ENCODE measurements at regions of chr12 and their contacts with region 1.

Region 1: GRCh38 chr12:110431957-110432587 is 18.1 kb downstream of the ARPC3 start:
- DNase-seq: no peak
- H3K4me3 Mint-ChIP-seq: no peak overlapping the region
- H3K27ac Mint-ChIP-seq: peak overlapping the region; percentile 31
- H3K4me1 Mint-ChIP-seq: peaks cover 6% of the 10 kb centered on the region
- H3K27me3 Mint-ChIP-seq: no peaks in the 10 kb centered on the region

Region 2: GRCh38 chr12:109927622-109928021 is 504.4 kb before region 1 on chr12:
- CTCF ChIA-PET with region 1: no interaction called
- POLR2A ChIA-PET with region 1: no interaction called
- DNase-seq: peak; percentile 51
- H3K4me3 Mint-ChIP-seq: no peak overlapping the region
- H3K27ac Mint-ChIP-seq: no peak overlapping the region
- H3K4me1 Mint-ChIP-seq: no peaks in the 10 kb centered on the region
- H3K27me3 Mint-ChIP-seq: no peaks in the 10 kb centered on the region

Region 3: DNA sequence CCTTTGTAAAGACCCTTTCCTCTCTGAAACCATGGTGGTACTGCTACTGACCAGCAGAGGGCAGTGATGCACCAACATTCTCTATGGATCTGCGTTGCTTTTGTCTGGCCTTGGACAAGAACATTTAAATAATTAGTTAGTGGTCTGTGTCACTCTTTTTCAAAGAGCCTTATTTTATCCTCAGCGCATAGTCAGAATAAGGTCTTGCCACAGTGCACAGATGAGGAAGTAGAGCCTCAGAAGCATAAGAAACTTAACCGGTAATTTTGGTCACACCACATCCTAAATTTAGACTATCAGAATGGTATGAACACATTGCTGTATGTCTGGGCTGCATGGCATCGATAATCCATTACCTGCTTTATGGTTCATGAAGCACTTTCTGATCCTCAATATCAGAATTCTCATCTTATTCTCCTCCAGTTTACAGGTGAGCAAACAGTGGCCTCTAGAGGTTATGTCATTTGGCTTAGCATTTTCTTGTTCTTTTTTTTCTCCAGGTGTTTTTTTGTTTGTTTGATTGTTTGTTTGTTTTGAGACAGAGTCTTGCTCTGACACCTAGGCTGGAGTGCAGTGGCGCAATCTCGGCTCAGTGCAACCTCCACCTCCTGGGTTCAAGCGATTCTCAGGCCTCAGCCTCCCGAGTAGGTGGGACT is 331.6 kb before region 1 on chr12:
- CTCF ChIA-PET with region 1: interaction called, 39 read pairs
- POLR2A ChIA-PET with region 1: interaction called, 5 read pairs
- DNase-seq: peak; percentile 64
- H3K4me3 Mint-ChIP-seq: no peak overlapping the region
- H3K27ac Mint-ChIP-seq: peak overlapping the region; percentile 0
- H3K4me1 Mint-ChIP-seq: peaks cover 11% of the 10 kb centered on the region
- H3K27me3 Mint-ChIP-seq: no peaks in the 10 kb centered on the region

Region 4: DNA sequence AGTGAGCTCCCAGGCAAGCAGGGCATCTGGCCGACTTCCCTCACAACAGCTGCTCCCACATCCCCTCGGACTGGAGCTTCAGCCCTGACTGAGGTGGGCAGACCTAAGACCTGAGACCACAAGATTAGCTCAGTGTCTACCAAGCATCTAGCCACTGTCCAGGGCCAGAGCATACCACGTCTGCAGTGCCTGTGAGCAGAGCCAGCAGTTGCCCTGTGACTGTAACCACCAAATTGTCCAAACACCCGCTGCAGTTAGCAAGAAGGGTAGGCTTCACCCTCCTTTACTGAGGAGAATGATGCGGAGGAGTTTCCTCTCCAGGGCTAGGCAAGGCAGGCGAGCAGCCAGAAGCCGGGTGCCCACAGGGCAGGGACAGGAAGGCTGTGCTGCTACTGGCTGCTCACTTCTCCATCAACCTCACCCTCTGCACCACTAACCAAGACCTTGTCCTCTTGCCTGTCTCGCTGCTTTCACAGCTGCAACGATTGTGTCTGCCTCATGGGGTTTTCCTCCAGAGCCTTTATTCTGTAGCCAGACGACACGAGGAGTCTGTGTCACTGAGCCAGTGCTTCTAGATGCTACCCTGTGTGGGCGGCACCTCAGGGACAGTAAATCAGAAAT is 82.4 kb before region 1 on chr12:
- CTCF ChIA-PET with region 1: interaction called, 56 read pairs
- POLR2A ChIA-PET with region 1: interaction called, 10 read pairs
- DNase-seq: peak; percentile 45
- H3K4me3 Mint-ChIP-seq: no peak overlapping the region
- H3K27ac Mint-ChIP-seq: peak overlapping the region; percentile 58
- H3K4me1 Mint-ChIP-seq: peaks cover 37% of the 10 kb centered on the region
- H3K27me3 Mint-ChIP-seq: no peaks in the 10 kb centered on the region

Region 5: GRCh38 chr12:110403146-110403975 is 28.7 kb before region 1 on chr12 and contains the start of gene ANAPC7:
- CTCF ChIA-PET with region 1: interaction called, 13 read pairs
- POLR2A ChIA-PET with region 1: interaction called, 4 read pairs
- DNase-seq: peak; percentile 87
- H3K4me3 Mint-ChIP-seq: peak within 1 kb of the TSS; percentile 97
- H3K27ac Mint-ChIP-seq: peak within 1 kb of the TSS; percentile 98
- H3K4me1 Mint-ChIP-seq: peaks cover 28% of the 10 kb centered on the region
- H3K27me3 Mint-ChIP-seq: no peaks in the 10 kb centered on the region
- total RNA-seq, gene ANAPC7: 47.2 to 47.3 TPM

Region 6: DNA sequence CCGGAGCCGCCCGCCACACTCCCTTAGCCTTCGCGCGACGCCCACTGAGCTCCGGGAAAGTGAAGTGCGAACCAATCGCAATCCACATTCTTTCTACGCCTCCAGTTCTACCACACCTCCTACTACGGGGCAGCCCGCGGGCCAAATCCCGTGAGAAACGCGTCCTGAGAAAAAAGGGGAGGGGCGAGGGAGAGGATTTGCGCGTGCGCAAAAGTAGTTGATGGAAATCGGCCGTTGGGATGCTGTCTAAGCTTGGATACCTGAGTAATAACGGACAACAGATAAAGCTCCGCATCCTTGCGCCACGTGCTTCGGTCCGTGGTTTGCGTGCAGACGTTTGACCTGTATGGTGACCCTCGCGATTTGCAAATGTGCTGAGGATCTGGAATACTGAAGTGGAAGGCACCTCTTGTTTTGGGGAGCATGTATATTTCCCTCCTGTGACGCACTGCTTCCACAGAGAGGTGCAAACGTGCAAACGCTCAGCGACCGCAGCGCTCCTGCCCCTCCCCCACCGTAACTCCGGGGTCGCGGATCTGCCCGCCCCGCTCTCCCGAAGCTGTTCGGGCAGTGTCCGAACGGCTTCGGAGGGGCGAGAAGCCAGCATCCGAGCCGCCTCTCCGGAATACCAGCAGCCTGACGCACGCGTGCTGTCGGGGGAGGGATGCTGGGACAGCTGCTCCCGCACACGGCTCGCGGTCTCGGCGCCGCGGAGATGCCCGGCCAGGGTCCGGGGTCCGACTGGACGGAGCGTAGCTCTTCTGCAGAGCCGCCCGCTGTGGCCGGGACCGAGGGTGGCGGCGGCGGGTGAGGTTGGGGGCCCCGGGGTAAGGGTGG is 36.4 kb after region 1 on chr12 and contains the starts of genes FAM216A and GPN3:
- CTCF ChIA-PET with region 1: interaction called, 22 read pairs
- POLR2A ChIA-PET with region 1: interaction called, 14 read pairs
- DNase-seq: peak; percentile 98
- H3K4me3 Mint-ChIP-seq: peak within 1 kb of the TSS; percentile 92
- H3K27ac Mint-ChIP-seq: peak within 1 kb of the TSS; percentile 95
- H3K4me1 Mint-ChIP-seq: peaks cover 37% of the 10 kb centered on the region
- H3K27me3 Mint-ChIP-seq: no peaks in the 10 kb centered on the region
- total RNA-seq, gene FAM216A: 14.7 to 16.7 TPM
- total RNA-seq, gene GPN3: 18.9 to 21.6 TPM

Region 7: DNA sequence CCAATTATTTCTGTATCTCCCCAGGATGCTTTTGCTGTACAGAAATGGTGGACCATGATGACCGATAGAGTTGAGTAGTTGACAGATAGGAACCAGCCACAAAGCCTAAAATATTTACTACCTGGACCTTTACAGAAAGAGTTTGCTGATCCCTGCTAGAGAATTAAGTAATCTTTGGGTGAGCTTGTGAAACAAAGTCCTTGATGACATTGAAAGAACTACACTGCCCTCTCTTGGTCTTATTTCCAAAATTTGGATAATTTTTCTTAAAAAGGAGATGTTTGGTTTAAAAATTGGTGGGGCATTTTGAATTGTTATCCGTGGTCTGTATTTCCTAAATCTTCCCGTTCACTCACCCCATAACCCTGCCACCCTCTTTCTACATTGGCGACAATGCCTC is 168.2 kb after region 1 on chr12:
- CTCF ChIA-PET with region 1: interaction called, 25 read pairs
- POLR2A ChIA-PET with region 1: interaction called, 3 read pairs
- DNase-seq: no peak
- H3K4me3 Mint-ChIP-seq: no peak overlapping the region
- H3K27ac Mint-ChIP-seq: no peak overlapping the region
- H3K4me1 Mint-ChIP-seq: peaks cover 13% of the 10 kb centered on the region
- H3K27me3 Mint-ChIP-seq: no peaks in the 10 kb centered on the region

Region 8: GRCh38 chr12:110733089-110733715 is 301.1 kb after region 1 on chr12:
- CTCF ChIA-PET with region 1: no interaction called
- POLR2A ChIA-PET with region 1: no interaction called
- DNase-seq: no peak
- H3K4me3 Mint-ChIP-seq: no peak overlapping the region
- H3K27ac Mint-ChIP-seq: peak overlapping the region; percentile 51
- H3K4me1 Mint-ChIP-seq: peaks cover 87% of the 10 kb centered on the region
- H3K27me3 Mint-ChIP-seq: no peaks in the 10 kb centered on the region